Caco-2 (cell line): ENCODE measurements at regions of chr6 and their contacts with region 1.

Region 1: DNA sequence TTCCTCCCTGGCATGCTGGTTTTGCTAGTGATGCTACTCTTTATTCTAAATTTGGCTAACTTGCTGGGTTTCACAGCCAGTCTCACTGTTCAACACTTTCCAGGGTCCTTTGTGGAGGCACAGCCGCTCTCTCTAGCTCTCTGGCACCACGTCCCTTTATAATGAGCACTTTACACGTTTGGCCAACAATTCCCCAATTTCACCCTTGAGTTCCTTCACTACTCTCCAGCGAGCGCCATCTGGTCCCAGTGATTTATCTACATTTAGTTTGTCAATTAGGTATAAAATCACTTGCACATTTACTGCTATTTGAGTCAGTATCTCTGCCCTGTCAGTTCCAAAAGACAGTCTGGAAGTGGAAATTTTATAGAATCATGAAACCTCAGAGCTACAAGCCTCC is 241.9 kb upstream of the MOCS1 start:
- DNase-seq: no peak
- H3K4me3 ChIP-seq: no peak overlapping the region
- H3K4me3 Mint-ChIP-seq: no peak overlapping the region
- H3K27ac Mint-ChIP-seq: no peak overlapping the region
- H3K4me1 ChIP-seq: no peaks in the 10 kb centered on the region
- H3K4me1 Mint-ChIP-seq: no peaks in the 10 kb centered on the region
- H3K27me3 ChIP-seq: no peaks in the 10 kb centered on the region
- H3K27me3 Mint-ChIP-seq: peaks cover 22% of the 10 kb centered on the region
- CTCF ChIP-seq: no peak

Region 2: GRCh38 chr6:39850736-39851297 is 325.3 kb before region 1 on chr6:
- CTCF ChIA-PET with region 1: no interaction called
- POLR2A ChIA-PET with region 1: no interaction called
- intact Hi-C with region 1: no loop called
- DNase-seq: no peak
- H3K4me3 ChIP-seq: no peak overlapping the region
- H3K4me3 Mint-ChIP-seq: no peak overlapping the region
- H3K27ac Mint-ChIP-seq: no peak overlapping the region
- H3K4me1 ChIP-seq: peaks cover 10% of the 10 kb centered on the region; the same call in 1 of the 2 replicates
- H3K4me1 Mint-ChIP-seq: peaks cover 5% of the 10 kb centered on the region
- H3K27me3 ChIP-seq: no peaks in the 10 kb centered on the region
- H3K27me3 Mint-ChIP-seq: no peaks in the 10 kb centered on the region
- CTCF ChIP-seq: no peak

Region 3: GRCh38 chr6:39952167-39952566 is 224.0 kb before region 1 on chr6:
- CTCF ChIA-PET with region 1: no interaction called
- POLR2A ChIA-PET with region 1: no interaction called
- intact Hi-C with region 1: no loop called
- DNase-seq: no peak
- H3K4me3 ChIP-seq: no peak overlapping the region
- H3K4me3 Mint-ChIP-seq: no peak overlapping the region
- H3K27ac Mint-ChIP-seq: no peak overlapping the region
- H3K4me1 ChIP-seq: peaks cover 20% of the 10 kb centered on the region
- H3K4me1 Mint-ChIP-seq: peaks cover 15% of the 10 kb centered on the region
- H3K27me3 ChIP-seq: no peaks in the 10 kb centered on the region
- H3K27me3 Mint-ChIP-seq: no peaks in the 10 kb centered on the region
- CTCF ChIP-seq: no peak

Region 4: DNA sequence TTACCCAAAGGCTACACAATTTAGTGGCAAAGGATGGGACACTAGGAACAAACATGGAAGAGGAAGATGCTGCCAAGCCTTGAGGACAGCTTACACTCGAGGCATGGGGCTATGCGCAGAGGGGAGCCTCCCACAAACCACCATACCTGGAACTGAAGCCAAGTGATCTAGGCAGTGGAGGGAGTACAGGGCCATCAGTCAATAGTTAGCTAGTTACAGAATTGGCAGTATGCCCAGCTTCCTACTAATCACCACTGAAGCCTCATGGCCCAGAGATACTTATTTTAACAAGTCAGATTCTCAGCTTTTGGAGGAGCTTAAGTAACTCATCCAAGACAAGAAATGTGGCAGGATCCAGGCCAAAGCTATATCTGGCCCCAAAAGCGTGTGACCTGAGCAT is 15.3 kb before region 1 on chr6:
- CTCF ChIA-PET with region 1: interaction called, 10 read pairs
- POLR2A ChIA-PET with region 1: no interaction called
- intact Hi-C with region 1: no loop called
- DNase-seq: no peak
- H3K4me3 ChIP-seq: no peak overlapping the region
- H3K4me3 Mint-ChIP-seq: no peak overlapping the region
- H3K27ac Mint-ChIP-seq: no peak overlapping the region
- H3K4me1 ChIP-seq: no peaks in the 10 kb centered on the region
- H3K4me1 Mint-ChIP-seq: no peaks in the 10 kb centered on the region
- H3K27me3 ChIP-seq: no peaks in the 10 kb centered on the region
- H3K27me3 Mint-ChIP-seq: no peaks in the 10 kb centered on the region
- CTCF ChIP-seq: no peak